CD8-positive, alpha-beta T cell (primary cell): ENCODE measurements at regions of chr15 and their contacts with region 1.

Region 1: DNA sequence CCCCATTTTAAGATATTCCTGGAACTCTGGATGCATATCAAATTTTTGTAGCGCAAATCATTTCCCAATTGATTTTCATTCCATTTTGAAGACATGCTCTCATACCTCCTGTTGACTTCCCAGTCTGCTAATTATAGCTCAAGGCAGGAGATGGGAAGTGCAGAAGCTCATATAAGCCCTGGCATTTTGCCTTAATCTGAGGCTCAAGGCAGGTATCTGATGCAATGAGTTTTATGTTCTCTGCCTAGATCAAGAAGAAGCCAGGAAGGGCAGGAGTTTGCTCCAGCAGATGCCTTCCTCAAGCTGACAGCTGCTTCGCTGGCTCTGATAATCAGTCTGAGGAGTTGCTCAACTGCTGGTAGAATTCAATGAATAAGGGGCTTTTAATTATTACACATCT is 65.6 kb upstream of the NEDD4 start:
- DNase-seq: no peak
- ATAC-seq: no peak
- H3K4me3 ChIP-seq: no peak overlapping the region
- H3K4me3 Mint-ChIP-seq: no peak overlapping the region
- H3K27ac ChIP-seq: no peak overlapping the region
- H3K27ac Mint-ChIP-seq: no peak overlapping the region
- H3K4me1 ChIP-seq: no peaks in the 10 kb centered on the region
- H3K4me1 Mint-ChIP-seq: no peaks in the 10 kb centered on the region
- H3K27me3 ChIP-seq: no peaks in the 10 kb centered on the region
- H3K27me3 Mint-ChIP-seq: peaks cover 3% of the 10 kb centered on the region
- CTCF ChIP-seq: no peak

Region 2: DNA sequence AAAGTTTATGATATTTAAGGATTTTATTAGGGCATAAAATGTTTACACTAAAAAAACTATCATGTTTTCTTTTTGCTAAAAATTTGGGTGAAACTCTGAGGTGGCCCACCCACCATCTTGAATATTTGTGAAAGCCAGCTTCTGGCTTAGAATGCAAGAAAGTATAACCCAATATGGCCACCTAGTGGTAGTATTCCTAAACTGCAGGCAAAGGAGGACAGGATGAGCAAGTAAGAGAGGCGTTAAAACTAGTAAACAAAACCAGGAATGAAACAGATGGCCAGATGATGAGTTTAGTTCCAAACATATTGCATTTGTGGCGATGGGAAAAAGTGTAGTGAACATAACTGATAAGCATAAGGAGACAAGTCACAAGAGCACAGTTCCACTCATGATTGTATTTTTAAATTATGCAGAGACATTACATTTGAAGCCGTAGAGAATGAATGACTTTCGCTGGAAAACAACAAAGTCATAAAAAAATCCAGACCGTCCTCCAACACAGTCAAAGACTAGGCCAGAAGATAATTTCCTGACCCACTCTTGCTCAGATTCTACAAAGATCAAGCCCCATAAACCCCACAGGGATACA is 212.8 kb before region 1 on chr15:
- CTCF ChIA-PET with region 1: interaction called, 6 read pairs
- POLR2A ChIA-PET with region 1: no interaction called
- intact Hi-C with region 1: loop called in 1 of 2 experiments (anchors 5 kb)
- DNase-seq: peak in 6 of 9 experiments; percentile 2 to 75 (median 32)
- ATAC-seq: peak; percentile 49
- H3K4me3 ChIP-seq: no peak overlapping the region
- H3K4me3 Mint-ChIP-seq: no peak overlapping the region
- H3K27ac ChIP-seq: no peak overlapping the region
- H3K27ac Mint-ChIP-seq: no peak overlapping the region
- H3K4me1 ChIP-seq: no peaks in the 10 kb centered on the region
- H3K4me1 Mint-ChIP-seq: no peaks in the 10 kb centered on the region
- H3K27me3 ChIP-seq: no peaks in the 10 kb centered on the region
- H3K27me3 Mint-ChIP-seq: no peaks in the 10 kb centered on the region
- CTCF ChIP-seq: peak; percentile 95

Region 3: GRCh38 chr15:56964182-56964581 is 905.2 kb after region 1 on chr15:
- CTCF ChIA-PET with region 1: no interaction called
- POLR2A ChIA-PET with region 1: no interaction called
- intact Hi-C with region 1: no loop called
- DNase-seq: peak in 1 of 9 experiments; percentile 6
- ATAC-seq: no peak
- H3K4me3 ChIP-seq: no peak overlapping the region
- H3K4me3 Mint-ChIP-seq: no peak overlapping the region
- H3K27ac ChIP-seq: no peak overlapping the region
- H3K27ac Mint-ChIP-seq: peak overlapping the region; percentile 19
- H3K4me1 ChIP-seq: peaks cover 22% of the 10 kb centered on the region
- H3K4me1 Mint-ChIP-seq: peaks cover 60% of the 10 kb centered on the region
- H3K27me3 ChIP-seq: no peaks in the 10 kb centered on the region
- H3K27me3 Mint-ChIP-seq: no peaks in the 10 kb centered on the region
- CTCF ChIP-seq: no peak